ENCODE measurements at regions of chr17 and their contacts with region 1.

Region 1: DNA sequence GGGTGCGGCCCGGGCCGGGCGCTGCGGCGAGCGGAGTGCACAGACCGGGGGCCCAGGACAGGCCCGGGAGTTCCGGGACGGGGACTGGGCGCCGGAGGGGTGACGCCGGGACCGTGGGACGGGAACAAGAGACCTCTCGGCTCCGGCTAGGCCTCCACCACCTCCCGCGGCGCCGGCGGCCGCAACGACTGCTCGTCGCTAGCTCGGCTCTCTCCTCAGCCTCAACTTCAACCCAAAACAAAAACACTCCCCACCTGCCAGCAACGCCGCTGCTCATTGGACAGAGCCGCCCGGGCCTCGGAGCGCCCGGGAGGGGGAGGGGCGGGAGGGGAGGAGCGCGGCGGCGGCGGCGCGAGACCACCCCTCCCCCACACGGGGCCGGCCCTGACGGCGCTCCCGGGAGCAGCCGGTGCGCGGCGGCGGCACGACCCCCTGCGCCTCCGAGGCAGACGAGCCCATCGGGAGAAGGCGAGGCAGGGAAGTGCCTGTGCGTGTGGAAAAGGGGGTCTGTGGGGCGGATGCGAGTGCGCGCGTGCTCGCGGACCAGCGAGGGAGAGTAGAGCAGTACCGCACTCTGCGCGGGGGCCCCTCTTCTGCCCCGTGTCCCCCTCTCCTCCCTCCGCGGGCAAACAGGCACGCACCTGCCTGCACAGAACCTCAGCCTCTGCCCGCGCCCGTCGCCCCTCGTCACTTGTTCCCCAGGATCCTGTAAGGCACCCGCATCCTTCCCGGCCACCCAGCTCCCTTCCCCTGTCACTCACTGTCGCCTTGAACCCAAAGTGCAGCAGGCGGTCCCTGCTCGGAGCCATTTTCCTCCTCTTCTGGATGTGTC is at the start of gene FBXL20:
- DNase-seq: peak; percentile 74 to 85
- H3K4me3 ChIP-seq: peak within 1 kb of the TSS; percentile 66
- H3K27ac ChIP-seq: no peak within 1 kb of the TSS
- H3K4me1 ChIP-seq: peaks cover 32% of the 10 kb centered on the region
- H3K27me3 ChIP-seq: no peaks in the 10 kb centered on the region
- CTCF ChIP-seq: no peak
- total RNA-seq, gene FBXL20: 18.8 and 20.2 TPM in 2 replicates

Region 2: DNA sequence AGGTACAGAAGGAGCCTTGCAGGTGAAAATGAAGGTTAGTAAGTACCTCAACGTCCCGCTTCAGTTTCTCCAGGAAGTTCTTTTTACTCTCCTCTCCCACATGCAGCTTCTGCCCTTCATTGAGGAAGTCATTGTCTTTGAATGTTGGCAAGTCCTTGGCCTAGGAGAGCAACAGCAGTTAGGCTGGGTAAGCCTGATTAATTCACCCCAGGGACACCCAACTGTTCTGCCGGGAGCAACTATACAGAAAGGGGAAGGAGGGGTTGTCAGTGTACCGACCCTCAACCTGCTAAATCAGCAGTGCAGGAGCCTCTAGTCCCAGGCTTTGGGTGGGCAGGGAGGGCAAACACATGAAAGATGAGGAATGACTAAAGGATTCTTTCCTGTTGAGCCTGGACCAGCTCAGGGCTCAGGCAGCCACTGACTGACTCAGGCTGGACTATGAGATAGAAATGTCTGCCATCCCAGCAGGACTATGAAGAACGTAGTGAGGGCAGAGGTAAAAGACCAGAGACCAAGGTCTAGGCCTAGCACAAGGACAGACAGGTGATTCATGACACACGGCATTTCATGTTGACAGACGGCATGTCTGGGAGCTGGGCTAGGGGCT is 623.9 kb before region 1 on chr17:
- CTCF ChIA-PET with region 1: no interaction called
- POLR2A ChIA-PET with region 1: interaction called, 13 read pairs
- intact Hi-C with region 1: no loop called
- DNase-seq: no peak
- H3K4me3 ChIP-seq: no peak overlapping the region
- H3K27ac ChIP-seq: no peak overlapping the region
- H3K4me1 ChIP-seq: no peaks in the 10 kb centered on the region
- H3K27me3 ChIP-seq: no peaks in the 10 kb centered on the region
- CTCF ChIP-seq: no peak

Region 3: DNA sequence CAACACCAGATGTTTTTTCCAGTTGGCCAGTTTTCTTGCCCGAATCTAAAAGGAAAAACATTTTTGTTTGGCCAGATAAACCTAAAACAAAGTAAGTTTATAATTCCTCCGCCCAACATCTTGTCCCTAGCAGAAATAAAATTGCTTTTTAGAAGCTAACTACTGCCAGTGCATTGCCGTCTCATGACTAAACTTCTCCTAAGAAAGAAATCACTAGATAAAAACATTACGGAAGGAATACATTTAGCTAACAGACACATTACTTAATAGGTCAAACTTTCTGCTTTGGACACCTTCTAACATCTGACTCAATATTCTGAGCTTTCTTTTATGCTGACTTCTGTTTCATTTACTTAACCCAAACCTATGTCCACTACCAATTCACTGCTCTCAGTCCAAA is 36.4 kb before region 1 on chr17:
- CTCF ChIA-PET with region 1: no interaction called
- POLR2A ChIA-PET with region 1: interaction called, 19 read pairs
- intact Hi-C with region 1: no loop called
- DNase-seq: no peak
- H3K4me3 ChIP-seq: no peak overlapping the region
- H3K27ac ChIP-seq: no peak overlapping the region; the same call in 1 of the 2 replicates
- H3K4me1 ChIP-seq: no peaks in the 10 kb centered on the region
- H3K27me3 ChIP-seq: no peaks in the 10 kb centered on the region
- CTCF ChIP-seq: no peak

Region 4: GRCh38 chr17:39863918-39864746 is 462.5 kb after region 1 on chr17 and contains the start of gene IKZF3:
- CTCF ChIA-PET with region 1: interaction called, 15 read pairs
- POLR2A ChIA-PET with region 1: no interaction called
- intact Hi-C with region 1: no loop called
- DNase-seq: peak in 1 of 2 experiments; percentile 55
- H3K4me3 ChIP-seq: peak within 1 kb of the TSS; percentile 46; the same call in 1 of the 2 replicates
- H3K27ac ChIP-seq: no peak within 1 kb of the TSS
- H3K4me1 ChIP-seq: peaks cover 4% of the 10 kb centered on the region; the same call in 1 of the 2 replicates
- H3K27me3 ChIP-seq: peaks cover 27% of the 10 kb centered on the region
- CTCF ChIP-seq: 0 out of 2 replicates have a peak, but pooled peaks have one; percentile 32
- total RNA-seq, gene IKZF3: 0.04 TPM in 1 of 2 replicates, not detected in the other

Measured in PC-9 (cell line).